A549 (cell line): ENCODE measurements at regions of chr1 and their contacts with region 1.

Region 1: GRCh38 chr1:156625436-156626078 is 6.3 kb downstream of the HAPLN2 start:
- DNase-seq: peak in 1 of 2 experiments; percentile 61
- ATAC-seq: peak; percentile 27 to 64
- H3K4me3 ChIP-seq: peak overlapping the region; percentile 49
- H3K27ac ChIP-seq: peak overlapping the region; percentile 3 to 76; a peak in 3 of 6 replicates
- H3K4me1 ChIP-seq: peaks cover 12% of the 10 kb centered on the region
- CTCF ChIP-seq: peak; percentile 80
- EP300 ChIP-seq: no peak
- POLR2A ChIP-seq: no peak
- RAD21 ChIP-seq: peak; percentile 65 to 72

Region 2: GRCh38 chr1:156591432-156592157 is 34.0 kb before region 1 on chr1 and contains the start of gene NAXE:
- CTCF ChIA-PET with region 1: interaction called, 10 read pairs
- POLR2A ChIA-PET with region 1: no interaction called
- DNase-seq: peak; percentile 57 to 79
- ATAC-seq: peak; percentile 76 to 89
- H3K4me3 ChIP-seq: peak within 1 kb of the TSS; percentile 72
- H3K27ac ChIP-seq: peak within 1 kb of the TSS; percentile 94 to 98
- H3K4me1 ChIP-seq: peaks cover 10% of the 10 kb centered on the region; the same call in 2 of the 3 replicates
- CTCF ChIP-seq: no peak
- EP300 ChIP-seq: no peak
- POLR2A ChIP-seq: peak; percentile 91
- RAD21 ChIP-seq: no peak
- polyA plus RNA-seq, gene NAXE: 81.4 and 109 TPM in 2 replicates

Region 3: GRCh38 chr1:156641761-156642264 is 16.3 kb after region 1 on chr1 and contains the start of gene BCAN:
- CTCF ChIA-PET with region 1: interaction called, 323 read pairs
- POLR2A ChIA-PET with region 1: no interaction called
- DNase-seq: no peak
- ATAC-seq: no peak
- H3K4me3 ChIP-seq: no peak within 1 kb of the TSS
- H3K27ac ChIP-seq: no peak within 1 kb of the TSS
- H3K4me1 ChIP-seq: no peaks in the 10 kb centered on the region
- CTCF ChIP-seq: no peak
- EP300 ChIP-seq: no peak
- POLR2A ChIP-seq: no peak
- RAD21 ChIP-seq: no peak
- polyA plus RNA-seq, gene BCAN: 0.12 TPM in 1 of 2 replicates, not detected in the other

Region 4: DNA sequence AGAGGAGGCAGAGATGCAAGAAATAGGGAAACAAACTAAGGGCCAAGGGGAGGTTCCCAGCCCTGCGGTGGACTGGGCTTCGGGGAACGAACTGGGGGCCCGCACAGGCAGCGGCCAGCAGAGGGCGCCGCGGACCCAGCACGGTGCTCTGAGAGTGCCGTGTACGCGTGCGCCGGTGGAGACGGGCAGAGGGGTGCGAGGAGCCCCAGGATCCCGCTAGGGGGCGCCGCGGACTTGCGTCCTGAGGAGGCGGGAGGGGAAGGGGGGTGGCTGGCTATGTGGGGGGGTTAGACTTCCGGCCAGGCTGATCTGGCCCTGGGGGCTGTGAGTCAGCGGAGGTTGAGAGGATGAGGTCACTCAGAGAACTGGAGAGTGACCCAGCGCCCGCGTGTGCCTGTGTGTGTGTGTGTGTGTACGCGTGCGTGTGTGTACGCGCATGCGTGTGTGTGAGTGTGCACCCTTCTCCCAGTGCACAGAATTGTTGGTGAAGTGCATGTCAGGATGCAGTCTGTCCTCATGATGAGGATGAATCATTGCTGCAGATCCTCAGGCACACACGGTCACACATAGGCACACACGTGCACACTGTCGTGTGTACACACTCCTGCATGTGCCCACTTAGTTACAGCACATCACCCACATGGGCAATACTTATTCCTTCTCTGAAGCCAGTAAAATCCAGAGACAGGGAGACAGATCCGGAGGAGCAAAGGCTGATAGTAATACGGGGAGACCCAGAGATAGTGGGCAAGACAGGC is 34.6 kb after region 1 on chr1:
- CTCF ChIA-PET with region 1: interaction called, 354 read pairs
- POLR2A ChIA-PET with region 1: no interaction called
- DNase-seq: peak; percentile 98
- ATAC-seq: peak; percentile 70 to 83
- H3K4me3 ChIP-seq: peak overlapping the region; percentile 77
- H3K27ac ChIP-seq: peak overlapping the region; percentile 97
- H3K4me1 ChIP-seq: peaks cover 65% of the 10 kb centered on the region
- CTCF ChIP-seq: peak; percentile 99
- EP300 ChIP-seq: peak in 1 of 2 experiments; percentile 62; a peak in 2 of 5 replicates
- POLR2A ChIP-seq: peak; percentile 44; the same call in 1 of the 2 replicates
- RAD21 ChIP-seq: peak; percentile 78 to 91

Region 5: GRCh38 chr1:156705918-156706656 is 80.5 kb after region 1 on chr1:
- CTCF ChIA-PET with region 1: interaction called, 93 read pairs
- POLR2A ChIA-PET with region 1: no interaction called
- DNase-seq: peak; percentile 53 to 62
- ATAC-seq: peak; percentile 28 to 66; a peak in 4 of 6 replicates
- H3K4me3 ChIP-seq: peak overlapping the region; percentile 45
- H3K27ac ChIP-seq: peak overlapping the region; percentile 65 to 86; a peak in 5 of 6 replicates
- H3K4me1 ChIP-seq: peaks cover 61% of the 10 kb centered on the region
- CTCF ChIP-seq: peak; percentile 88
- EP300 ChIP-seq: no peak
- POLR2A ChIP-seq: no peak
- RAD21 ChIP-seq: peak; percentile 67 to 80

Region 6: DNA sequence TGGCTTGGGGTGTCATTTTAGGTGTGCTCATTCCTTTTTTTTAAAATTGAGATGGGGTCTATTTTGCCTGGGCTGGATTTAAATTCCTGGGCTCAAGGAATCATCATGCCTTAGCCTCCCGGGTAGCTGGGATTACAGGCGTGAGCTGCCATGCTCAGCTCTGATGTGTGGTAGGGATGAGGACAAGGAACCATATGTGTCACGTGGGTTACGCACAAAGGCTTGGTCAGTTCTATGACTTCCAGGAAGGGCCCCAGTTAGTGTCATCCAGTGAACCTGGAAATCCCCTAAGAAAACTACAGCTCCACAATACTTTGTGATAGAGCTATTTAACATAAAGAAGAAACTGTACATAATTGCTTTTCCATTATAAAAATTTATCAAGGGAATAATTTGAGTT is 96.0 kb after region 1 on chr1:
- CTCF ChIA-PET with region 1: interaction called, 16 read pairs
- POLR2A ChIA-PET with region 1: no interaction called
- DNase-seq: no peak
- ATAC-seq: no peak
- H3K4me3 ChIP-seq: no peak overlapping the region
- H3K27ac ChIP-seq: no peak overlapping the region
- H3K4me1 ChIP-seq: peaks cover 16% of the 10 kb centered on the region
- CTCF ChIP-seq: no peak
- EP300 ChIP-seq: no peak
- POLR2A ChIP-seq: no peak
- RAD21 ChIP-seq: no peak

Region 7: GRCh38 chr1:157249326-157249725 is 623.8 kb after region 1 on chr1:
- CTCF ChIA-PET with region 1: no interaction called
- POLR2A ChIA-PET with region 1: no interaction called
- DNase-seq: no peak
- ATAC-seq: no peak
- H3K4me3 ChIP-seq: no peak overlapping the region
- H3K27ac ChIP-seq: no peak overlapping the region
- H3K4me1 ChIP-seq: no peaks in the 10 kb centered on the region
- CTCF ChIP-seq: no peak
- EP300 ChIP-seq: no peak
- POLR2A ChIP-seq: no peak
- RAD21 ChIP-seq: no peak